ENCODE measurements at regions of chr12 and their contacts with region 1.

Region 1: DNA sequence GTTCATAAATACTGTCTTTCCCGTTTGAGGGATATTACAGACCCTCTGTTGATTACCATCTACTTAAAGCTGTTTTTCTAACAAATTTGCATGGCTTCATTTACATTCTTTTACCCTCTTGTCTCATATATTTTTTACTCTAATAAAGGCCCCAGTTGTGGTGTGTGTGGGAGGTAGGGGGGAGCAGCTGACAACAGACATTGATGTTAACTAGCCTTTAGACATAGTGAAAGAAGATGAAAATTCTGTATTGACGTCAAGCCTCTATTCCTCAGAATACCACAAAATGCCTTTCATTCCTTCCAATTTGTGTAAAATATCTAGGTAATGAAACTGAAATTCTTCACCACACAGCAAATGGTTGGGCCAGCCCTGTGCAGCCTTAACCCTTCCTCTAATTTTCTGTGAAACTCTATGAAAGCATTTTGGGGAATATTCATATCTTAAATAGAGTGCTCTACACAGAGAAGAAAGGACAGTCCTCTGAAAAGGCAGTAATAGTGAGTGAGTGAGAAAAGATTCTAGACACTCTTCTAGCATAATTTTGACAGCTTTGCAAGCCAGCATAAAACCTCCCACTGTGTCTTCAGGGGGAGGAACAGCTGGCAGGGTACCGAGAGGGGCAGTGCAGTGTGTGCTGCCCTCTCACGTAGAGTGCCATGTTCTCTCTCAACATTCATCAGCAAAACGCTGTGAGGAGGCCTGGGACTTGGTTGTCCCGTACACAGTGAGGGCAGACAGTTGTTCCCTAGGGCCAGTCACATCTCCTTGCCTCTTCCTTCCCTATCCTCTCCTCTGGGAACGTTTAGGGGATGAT is 20.1 kb upstream of the CERS5 start:
- DNase-seq: no peak
- ATAC-seq: peak; percentile 47
- H3K4me3 Mint-ChIP-seq: no peak overlapping the region
- H3K27ac Mint-ChIP-seq: peak overlapping the region; percentile 7
- H3K4me1 Mint-ChIP-seq: peaks cover 50% of the 10 kb centered on the region
- H3K27me3 Mint-ChIP-seq: no peaks in the 10 kb centered on the region

Region 2: GRCh38 chr12:50025187-50026059 is 161.9 kb before region 1 on chr12 and contains the start of gene RACGAP1:
- CTCF ChIA-PET with region 1: no interaction called
- POLR2A ChIA-PET with region 1: no interaction called
- DNase-seq: peak; percentile 98
- ATAC-seq: peak; percentile 98
- H3K4me3 Mint-ChIP-seq: peak within 1 kb of the TSS; percentile 94
- H3K27ac Mint-ChIP-seq: peak within 1 kb of the TSS; percentile 98
- H3K4me1 Mint-ChIP-seq: peaks cover 39% of the 10 kb centered on the region
- H3K27me3 Mint-ChIP-seq: no peaks in the 10 kb centered on the region
- total RNA-seq, gene RACGAP1: 185 to 200 TPM

Region 3: GRCh38 chr12:50151047-50151687 is 36.1 kb before region 1 on chr12:
- CTCF ChIA-PET with region 1: no interaction called
- POLR2A ChIA-PET with region 1: no interaction called
- DNase-seq: no peak
- ATAC-seq: no peak
- H3K4me3 Mint-ChIP-seq: no peak overlapping the region
- H3K27ac Mint-ChIP-seq: peak overlapping the region; percentile 47
- H3K4me1 Mint-ChIP-seq: peaks cover 5% of the 10 kb centered on the region
- H3K27me3 Mint-ChIP-seq: no peaks in the 10 kb centered on the region

Region 4: GRCh38 chr12:50174971-50175715 is 12.1 kb before region 1 on chr12:
- CTCF ChIA-PET with region 1: interaction called, 10 read pairs
- POLR2A ChIA-PET with region 1: no interaction called
- DNase-seq: peak; percentile 39
- ATAC-seq: no peak
- H3K4me3 Mint-ChIP-seq: no peak overlapping the region
- H3K27ac Mint-ChIP-seq: no peak overlapping the region
- H3K4me1 Mint-ChIP-seq: peaks cover 2% of the 10 kb centered on the region
- H3K27me3 Mint-ChIP-seq: no peaks in the 10 kb centered on the region

Region 5: DNA sequence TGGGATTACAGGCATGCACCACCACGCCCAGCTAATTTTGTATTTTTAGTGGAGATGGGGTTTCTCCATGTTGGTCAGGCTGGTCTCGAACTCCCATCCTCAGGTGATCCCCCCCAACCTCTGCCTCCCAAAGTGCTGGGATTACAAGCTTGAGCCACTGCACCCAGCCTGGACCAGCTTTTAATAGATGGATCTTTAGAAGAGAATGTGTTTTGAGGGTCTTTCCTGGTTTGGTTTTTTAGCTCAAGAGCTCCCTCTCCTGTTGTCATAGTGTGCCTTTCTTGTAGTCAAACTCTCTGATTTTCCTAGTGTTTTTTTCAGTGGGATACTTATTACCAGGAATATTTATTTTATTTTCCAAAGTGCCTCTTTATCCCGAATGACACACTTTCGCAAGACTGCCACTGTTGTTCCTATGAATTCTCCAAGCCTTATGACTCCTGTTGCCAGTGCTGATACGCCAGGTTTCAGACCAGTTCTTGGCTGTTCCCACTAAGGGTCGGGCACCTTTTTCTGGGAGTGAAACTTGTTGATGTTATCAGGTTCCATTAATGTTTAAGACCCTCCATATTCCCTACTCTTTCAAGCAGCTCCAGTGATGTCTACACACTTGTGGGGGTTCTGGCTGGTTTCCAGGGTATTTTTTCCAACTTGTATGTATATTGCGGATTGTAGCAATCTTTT is 127.5 kb after region 1 on chr12:
- CTCF ChIA-PET with region 1: interaction called, 12 read pairs
- POLR2A ChIA-PET with region 1: no interaction called
- DNase-seq: no peak
- ATAC-seq: no peak
- H3K4me3 Mint-ChIP-seq: no peak overlapping the region
- H3K27ac Mint-ChIP-seq: no peak overlapping the region
- H3K4me1 Mint-ChIP-seq: no peaks in the 10 kb centered on the region
- H3K27me3 Mint-ChIP-seq: no peaks in the 10 kb centered on the region